ENCODE measurements at regions of chr7 and their contacts with region 1.

Region 1: DNA sequence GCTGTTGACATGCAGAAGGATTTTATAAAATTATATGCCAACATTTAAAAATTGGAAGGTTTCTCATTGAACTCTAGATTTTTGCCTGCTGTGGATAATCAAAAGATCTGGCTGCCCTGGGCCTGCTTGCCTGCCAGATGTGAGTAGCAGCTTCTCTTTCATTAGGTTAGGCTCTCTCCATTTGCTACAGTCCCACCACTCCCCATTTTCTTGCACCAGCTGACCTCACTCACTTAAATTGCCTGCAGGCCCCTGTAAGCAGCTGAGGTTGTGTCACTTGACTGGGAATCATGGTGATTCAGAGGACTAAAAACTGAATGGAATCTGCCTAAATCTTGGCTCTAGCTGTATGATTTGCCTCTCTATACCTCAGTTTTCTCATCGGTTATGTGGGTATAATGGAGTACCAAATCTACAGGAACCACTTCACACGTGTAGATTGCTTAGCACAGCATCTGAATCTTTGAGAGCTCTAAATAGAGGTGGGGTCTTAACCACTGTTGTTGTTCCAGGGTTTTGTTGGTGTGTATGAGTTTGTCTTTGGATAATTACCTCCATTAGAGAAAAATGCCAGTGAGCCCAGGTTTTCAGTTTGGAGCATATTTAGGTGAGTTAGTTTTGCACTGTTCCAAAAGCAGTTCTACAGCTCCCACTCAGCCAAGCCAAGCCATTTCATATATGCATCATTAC is 18.6 kb upstream of the RAPGEF5 start:
- DNase-seq: no peak
- H3K4me3 ChIP-seq: no peak overlapping the region
- H3K27ac ChIP-seq: no peak overlapping the region
- H3K4me1 ChIP-seq: peaks cover 0 to 4% (median 0%) of the 10 kb centered on the region in 4 donors
- H3K27me3 ChIP-seq: no peaks in the 10 kb centered on the region
- CTCF ChIP-seq: no peak
- EP300 ChIP-seq: no peak
- POLR2A ChIP-seq: no peak

Region 2: DNA sequence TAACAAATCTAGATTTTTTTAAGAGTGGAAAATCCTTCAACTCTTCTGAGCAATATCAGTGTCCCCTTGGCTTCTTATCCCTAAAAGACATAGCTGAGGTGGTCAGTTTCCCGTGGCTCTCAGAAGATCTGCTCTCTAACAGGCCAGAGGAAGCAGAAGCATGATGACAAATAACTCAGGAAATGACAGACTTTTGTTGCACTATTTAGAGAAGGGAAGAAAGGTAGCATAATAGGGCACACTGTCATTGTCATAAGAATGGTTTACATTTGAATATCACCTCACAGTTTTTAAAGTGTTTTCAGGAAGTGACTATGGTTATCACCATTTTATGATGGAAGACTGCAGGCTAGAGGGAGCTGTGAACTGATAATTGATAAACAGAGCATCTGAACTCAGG is 15.0 kb after region 1 on chr7:
- in situ Hi-C with region 1: no loop called
- intact Hi-C with region 1: loop called (anchors 1 kb)
- DNase-seq: no peak
- H3K4me3 ChIP-seq: no peak overlapping the region
- H3K27ac ChIP-seq: no peak overlapping the region
- H3K4me1 ChIP-seq: peaks cover 0 to 5% (median 2%) of the 10 kb centered on the region in 4 donors
- H3K27me3 ChIP-seq: no peaks in the 10 kb centered on the region
- CTCF ChIP-seq: no peak
- EP300 ChIP-seq: no peak
- POLR2A ChIP-seq: no peak